ENCODE measurements at regions of chr12 and their contacts with region 1.

Region 1: DNA sequence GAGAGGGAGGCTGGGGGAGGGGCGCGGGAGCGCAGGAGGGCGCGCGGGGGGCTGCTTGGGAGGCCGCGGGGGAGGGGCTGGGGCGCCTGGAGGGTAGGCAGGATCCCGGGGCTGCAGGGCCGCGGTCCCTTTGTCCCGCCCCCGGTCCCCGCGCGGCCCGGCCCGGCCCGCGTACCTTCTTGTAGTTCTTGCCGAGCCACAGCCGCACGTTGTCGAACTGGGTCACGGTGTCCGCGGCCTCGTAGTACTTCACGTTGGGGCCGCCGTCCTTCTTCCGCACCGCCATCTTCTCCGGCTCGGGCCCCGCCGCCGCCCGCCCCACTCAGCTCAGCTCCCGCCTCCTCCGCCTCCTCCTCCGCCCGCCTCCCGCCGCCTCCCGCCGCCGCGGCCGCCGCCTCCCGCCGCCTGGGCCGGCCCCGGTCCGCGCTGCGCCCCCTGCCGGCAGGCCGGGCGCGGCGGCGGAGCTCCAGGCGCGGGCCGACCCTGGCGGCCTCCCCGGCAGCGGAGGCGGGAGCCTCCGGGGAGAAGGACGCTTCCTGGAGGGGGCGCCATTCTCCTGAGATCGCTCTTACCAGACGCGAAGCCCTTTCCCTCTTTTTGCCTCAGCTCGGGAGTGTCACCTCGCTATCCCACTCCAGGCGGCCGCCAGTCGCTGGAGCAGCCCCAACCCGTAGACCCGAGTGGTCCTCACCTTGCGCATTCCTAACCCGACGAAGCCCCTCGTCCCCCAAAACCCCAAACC is at the start of gene SMARCC2:
- DNase-seq: peak; percentile 88
- H3K4me3 ChIP-seq: peak within 1 kb of the TSS; percentile 70 to 95 (median 89)
- H3K27ac ChIP-seq: peak within 1 kb of the TSS; percentile 24
- H3K4me1 ChIP-seq: peaks cover 20% of the 10 kb centered on the region
- H3K27me3 ChIP-seq: no peaks in the 10 kb centered on the region
- CTCF ChIP-seq: peak; percentile 75 to 82
- POLR2A ChIP-seq: peak; percentile 41
- total RNA-seq, gene SMARCC2: 117 and 121 TPM in 2 replicates

Region 2: GRCh38 chr12:56117778-56118687 is 71.3 kb before region 1 on chr12 and contains the start of gene ZC3H10:
- CTCF ChIA-PET with region 1: interaction called, 236 read pairs
- POLR2A ChIA-PET with region 1: interaction called, 18 read pairs
- dilution Hi-C with region 1: no loop called
- intact Hi-C with region 1: loop called (anchors 1 kb)
- DNase-seq: peak; percentile 99
- H3K4me3 ChIP-seq: peak within 1 kb of the TSS; percentile 70 to 98 (median 72)
- H3K27ac ChIP-seq: peak within 1 kb of the TSS; percentile 86
- H3K4me1 ChIP-seq: peaks cover 24% of the 10 kb centered on the region
- H3K27me3 ChIP-seq: no peaks in the 10 kb centered on the region
- CTCF ChIP-seq: peak; percentile 42 to 62
- POLR2A ChIP-seq: peak; percentile 100
- total RNA-seq, gene ZC3H10: 8.7 and 10.1 TPM in 2 replicates

Region 3: DNA sequence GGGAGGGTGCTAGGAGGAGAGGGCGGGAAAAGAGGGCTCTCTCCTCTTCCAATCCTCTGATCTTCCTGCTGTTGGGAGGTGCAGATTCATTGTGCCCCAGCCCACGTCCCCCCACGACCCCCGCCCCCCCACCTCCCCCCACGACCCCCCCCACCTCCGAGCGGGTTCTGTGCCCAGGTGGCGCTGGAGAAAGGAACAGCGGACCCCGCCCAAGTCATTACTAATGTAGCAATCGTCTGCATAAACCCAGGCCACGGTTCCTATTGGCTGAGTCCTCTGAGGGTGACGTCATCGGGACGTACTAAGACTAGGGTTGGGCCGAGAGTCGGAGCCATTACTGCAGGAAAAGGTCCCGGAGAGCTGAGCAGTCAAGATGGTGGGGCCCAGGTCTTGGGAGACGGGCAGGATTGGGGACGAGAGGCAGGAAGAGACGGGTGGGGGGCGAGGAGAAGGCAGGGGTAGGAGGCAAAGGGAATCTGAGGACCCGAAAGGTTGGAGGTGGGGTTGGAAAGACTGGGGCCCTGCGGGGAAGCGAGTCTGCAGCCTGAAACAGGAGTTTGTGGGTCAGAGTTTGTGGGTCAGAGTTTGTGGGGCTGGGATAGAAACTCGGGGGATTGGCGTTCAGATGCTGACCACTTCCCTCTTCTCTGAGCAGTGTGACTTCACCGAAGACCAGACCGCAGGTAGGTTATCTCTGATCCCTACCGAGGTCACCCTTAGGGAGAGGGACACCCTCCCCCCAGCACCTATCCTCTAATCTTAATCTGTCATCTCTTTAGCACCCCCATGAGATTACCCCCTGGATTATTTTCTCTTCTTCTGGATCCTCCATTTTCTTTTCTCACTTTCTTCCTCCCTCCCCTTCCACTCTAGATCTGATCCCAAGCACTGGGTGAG is 31.1 kb before region 1 on chr12 and contains the start of gene MYL6:
- CTCF ChIA-PET with region 1: interaction called, 16 read pairs
- POLR2A ChIA-PET with region 1: interaction called, 4 read pairs
- dilution Hi-C with region 1: no loop called
- intact Hi-C with region 1: loop called (anchors 1 kb)
- DNase-seq: peak; percentile 96
- H3K4me3 ChIP-seq: peak within 1 kb of the TSS; percentile 78 to 98 (median 91)
- H3K27ac ChIP-seq: peak within 1 kb of the TSS; percentile 87
- H3K4me1 ChIP-seq: peaks cover 25% of the 10 kb centered on the region
- H3K27me3 ChIP-seq: no peaks in the 10 kb centered on the region
- CTCF ChIP-seq: no peak
- POLR2A ChIP-seq: peak; percentile 99
- total RNA-seq, gene MYL6: 2,364 and 2,543 TPM in 2 replicates

Region 4: GRCh38 chr12:56224102-56224701 is 34.9 kb after region 1 on chr12 and contains the start of gene NABP2:
- CTCF ChIA-PET with region 1: interaction called, 75 read pairs
- POLR2A ChIA-PET with region 1: interaction called, 6 read pairs
- dilution Hi-C with region 1: no loop called
- intact Hi-C with region 1: loop called (anchors 1 kb)
- DNase-seq: peak; percentile 99
- H3K4me3 ChIP-seq: peak within 1 kb of the TSS; percentile 11 to 49 (median 49)
- H3K27ac ChIP-seq: peak within 1 kb of the TSS; percentile 77
- H3K4me1 ChIP-seq: peaks cover 19% of the 10 kb centered on the region
- H3K27me3 ChIP-seq: no peaks in the 10 kb centered on the region
- CTCF ChIP-seq: peak; percentile 82 to 96
- POLR2A ChIP-seq: peak; percentile 7
- total RNA-seq, gene NABP2: 41.0 and 42.4 TPM in 2 replicates

Region 5: GRCh38 chr12:56299853-56300643 is 110.7 kb after region 1 on chr12 and contains the start of gene CS:
- CTCF ChIA-PET with region 1: interaction called, 4 read pairs
- POLR2A ChIA-PET with region 1: no interaction called
- dilution Hi-C with region 1: no loop called
- intact Hi-C with region 1: loop called (anchors 1 kb)
- DNase-seq: peak; percentile 96
- H3K4me3 ChIP-seq: peak within 1 kb of the TSS; percentile 2 to 91 (median 88)
- H3K27ac ChIP-seq: peak within 1 kb of the TSS; percentile 77
- H3K4me1 ChIP-seq: peaks cover 26% of the 10 kb centered on the region
- H3K27me3 ChIP-seq: no peaks in the 10 kb centered on the region
- CTCF ChIP-seq: no peak
- POLR2A ChIP-seq: peak; percentile 1
- total RNA-seq, gene CS: 296 and 312 TPM in 2 replicates

Region 6: GRCh38 chr12:56408799-56409417 is 219.6 kb after region 1 on chr12:
- CTCF ChIA-PET with region 1: no interaction called
- POLR2A ChIA-PET with region 1: no interaction called
- dilution Hi-C with region 1: no loop called
- intact Hi-C with region 1: no loop called
- DNase-seq: no peak
- H3K4me3 ChIP-seq: no peak overlapping the region
- H3K27ac ChIP-seq: no peak overlapping the region
- H3K4me1 ChIP-seq: no peaks in the 10 kb centered on the region
- H3K27me3 ChIP-seq: no peaks in the 10 kb centered on the region
- CTCF ChIP-seq: no peak
- POLR2A ChIP-seq: no peak